ENCODE measurements at regions of chr3 and their contacts with region 1.

Region 1: GRCh38 chr3:185976977-185977678 is 39.3 kb upstream of the TRA2B start:
- DNase-seq: peak; percentile 34
- H3K4me3 ChIP-seq: no peak overlapping the region
- H3K27ac ChIP-seq: no peak overlapping the region
- H3K27me3 ChIP-seq: no peaks in the 10 kb centered on the region
- CTCF ChIP-seq: peak; percentile 95

Region 2: GRCh38 chr3:185488465-185488864 is 488.7 kb before region 1 on chr3:
- CTCF ChIA-PET with region 1: no interaction called
- POLR2A ChIA-PET with region 1: no interaction called
- DNase-seq: no peak
- H3K4me3 ChIP-seq: no peak overlapping the region
- H3K27ac ChIP-seq: no peak overlapping the region
- H3K27me3 ChIP-seq: no peaks in the 10 kb centered on the region
- CTCF ChIP-seq: no peak

Region 3: GRCh38 chr3:185959609-185960517 is 17.3 kb before region 1 on chr3:
- CTCF ChIA-PET with region 1: interaction called, 12 read pairs
- POLR2A ChIA-PET with region 1: no interaction called
- DNase-seq: no peak
- H3K4me3 ChIP-seq: peak overlapping the region; percentile 17; the same call in 1 of the 2 replicates
- H3K27ac ChIP-seq: peak overlapping the region; percentile 68
- H3K27me3 ChIP-seq: peaks cover 3% of the 10 kb centered on the region
- CTCF ChIP-seq: no peak

Region 4: DNA sequence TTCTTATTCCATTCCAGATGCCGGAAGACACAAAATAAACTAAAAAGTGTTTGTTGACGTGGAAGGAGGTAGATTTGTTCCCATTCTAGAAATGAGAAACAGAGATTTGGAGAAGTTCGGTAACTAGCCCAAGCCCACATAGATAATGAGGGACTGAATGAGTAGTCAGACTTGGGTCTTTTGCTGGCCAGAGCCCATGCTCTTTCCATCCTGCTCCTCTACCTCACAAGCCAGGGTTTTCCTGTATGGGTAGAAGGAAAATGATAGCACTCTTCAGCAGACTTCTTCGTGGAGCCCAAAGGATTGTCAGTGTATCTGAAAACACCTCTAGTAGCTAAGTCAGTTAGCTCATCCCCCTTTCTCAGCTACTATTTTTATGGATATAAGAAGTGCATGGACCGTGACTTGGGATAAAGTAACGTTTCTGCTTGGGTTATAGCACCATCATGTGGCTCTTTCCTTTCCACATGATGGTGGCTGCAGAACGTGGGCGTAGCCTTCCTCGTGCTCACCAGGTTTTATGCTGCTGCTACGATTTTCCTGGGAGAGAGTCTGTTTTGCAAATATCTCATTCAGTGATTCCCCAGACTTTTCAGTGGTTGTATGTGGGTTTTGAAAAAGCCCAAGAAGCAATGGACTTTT is 300.3 kb after region 1 on chr3:
- CTCF ChIA-PET with region 1: interaction called, 51 read pairs
- POLR2A ChIA-PET with region 1: no interaction called
- DNase-seq: peak; percentile 37
- H3K4me3 ChIP-seq: no peak overlapping the region
- H3K27ac ChIP-seq: no peak overlapping the region
- H3K27me3 ChIP-seq: peaks cover 2% of the 10 kb centered on the region
- CTCF ChIP-seq: peak; percentile 64